Activated CD8-positive, alpha-beta memory T cell treated with anti-CD3 and anti-CD28 coated beads, Interleukin-2, amount 10 ng/mL, durations not matched to agents 7 days and 5 days (primary cell): ENCODE measurements at regions of chr19 and their contacts with region 1.

Region 1: GRCh38 chr19:4267101-4267900 is 11.8 kb upstream of the SHD start:
- DNase-seq: peak; percentile 75
- ATAC-seq: peak; percentile 69
- H3K4me3 Mint-ChIP-seq: no peak overlapping the region
- H3K27ac Mint-ChIP-seq: peak overlapping the region; percentile 35
- H3K4me1 Mint-ChIP-seq: peaks cover 36% of the 10 kb centered on the region
- H3K27me3 Mint-ChIP-seq: no peaks in the 10 kb centered on the region

Region 2: DNA sequence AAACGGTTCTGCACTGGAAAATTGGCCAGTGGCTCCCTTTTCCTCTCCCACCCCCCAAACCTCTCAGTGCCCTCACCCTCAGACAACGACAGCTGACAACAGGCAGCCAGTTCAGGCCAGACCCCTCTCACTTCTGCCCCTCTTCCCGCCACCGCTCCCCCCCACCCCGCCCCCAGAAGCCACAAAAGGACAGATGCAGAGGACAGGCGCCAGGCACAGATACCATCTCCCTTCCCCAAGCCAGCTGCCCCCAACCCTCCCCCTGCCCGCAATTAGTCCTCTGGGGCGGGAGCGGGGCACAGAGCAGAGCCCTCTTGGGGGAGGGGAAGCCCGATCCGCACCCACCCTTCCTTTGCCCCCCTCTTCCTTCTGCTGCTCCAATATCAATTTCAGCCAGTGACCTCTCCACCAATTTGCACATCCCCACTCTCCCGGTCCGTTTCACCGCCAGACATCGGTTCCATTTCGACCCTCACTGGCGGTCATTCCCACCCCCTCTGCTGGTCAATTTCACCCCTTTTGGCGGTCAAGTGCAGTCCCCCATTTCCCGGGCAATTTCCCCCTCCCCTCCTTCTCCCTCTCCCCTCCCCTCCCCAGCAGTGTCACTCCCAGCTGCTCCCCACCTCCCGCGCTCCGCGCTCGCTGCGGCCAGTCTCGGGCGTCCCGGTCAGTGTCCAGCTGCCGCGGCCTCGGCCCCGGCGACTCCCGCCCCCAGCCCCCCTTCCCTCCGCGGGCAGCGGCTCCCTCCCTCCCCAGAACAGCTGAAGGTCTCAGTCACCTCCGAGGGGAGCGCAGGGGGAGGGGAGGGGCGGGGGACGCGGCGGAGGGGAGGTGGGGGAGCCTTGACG is 11.3 kb after region 1 on chr19 and contains the start of gene SHD:
- CTCF ChIA-PET with region 1: interaction called, 10 read pairs
- DNase-seq: no peak
- ATAC-seq: no peak
- H3K4me3 Mint-ChIP-seq: no peak within 1 kb of the TSS
- H3K27ac Mint-ChIP-seq: no peak within 1 kb of the TSS
- H3K4me1 Mint-ChIP-seq: peaks cover 4% of the 10 kb centered on the region
- H3K27me3 Mint-ChIP-seq: peaks cover 35% of the 10 kb centered on the region
- total RNA-seq, gene SHD: not detected

Region 3: DNA sequence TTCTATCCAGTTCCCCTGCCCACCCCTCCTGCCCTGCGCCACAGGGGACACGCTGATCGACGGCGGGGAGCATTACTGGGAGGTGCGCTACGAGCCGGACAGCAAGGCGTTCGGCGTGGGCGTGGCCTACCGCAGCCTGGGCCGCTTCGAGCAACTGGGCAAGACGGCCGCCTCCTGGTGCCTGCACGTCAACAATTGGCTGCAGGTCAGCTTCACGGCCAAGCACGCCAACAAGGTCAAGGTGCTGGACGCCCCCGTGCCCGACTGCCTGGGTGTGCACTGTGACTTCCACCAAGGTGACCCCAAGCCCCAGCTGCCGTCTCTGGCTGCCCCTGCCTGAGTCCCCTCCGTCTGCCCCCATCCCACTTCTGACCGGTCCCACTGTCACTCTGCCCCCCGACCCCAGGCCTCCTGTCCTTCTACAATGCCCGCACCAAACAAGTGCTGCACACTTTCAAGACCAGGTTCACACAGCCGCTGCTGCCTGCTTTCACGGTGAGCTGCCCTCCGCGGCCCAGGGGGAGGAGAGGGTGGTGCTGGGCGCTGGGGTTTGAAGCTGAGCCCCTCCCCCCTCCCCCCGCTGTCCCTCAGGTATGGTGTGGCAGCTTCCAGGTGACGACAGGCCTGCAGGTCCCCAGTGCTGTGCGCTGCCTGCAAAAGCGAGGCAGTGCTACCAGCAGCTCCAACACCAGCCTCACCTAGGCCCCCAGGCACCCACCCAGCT is 55.8 kb after region 1 on chr19:
- CTCF ChIA-PET with region 1: interaction called, 19 read pairs
- DNase-seq: no peak
- ATAC-seq: no peak
- H3K4me3 Mint-ChIP-seq: no peak overlapping the region
- H3K27ac Mint-ChIP-seq: no peak overlapping the region
- H3K4me1 Mint-ChIP-seq: peaks cover 16% of the 10 kb centered on the region
- H3K27me3 Mint-ChIP-seq: peaks cover 8% of the 10 kb centered on the region

Region 4: GRCh38 chr19:4352701-4353121 is 85.4 kb after region 1 on chr19:
- CTCF ChIA-PET with region 1: interaction called, 125 read pairs
- DNase-seq: peak; percentile 76
- ATAC-seq: peak; percentile 69
- H3K4me3 Mint-ChIP-seq: no peak overlapping the region
- H3K27ac Mint-ChIP-seq: no peak overlapping the region
- H3K4me1 Mint-ChIP-seq: peaks cover 1% of the 10 kb centered on the region
- H3K27me3 Mint-ChIP-seq: no peaks in the 10 kb centered on the region

Region 5: DNA sequence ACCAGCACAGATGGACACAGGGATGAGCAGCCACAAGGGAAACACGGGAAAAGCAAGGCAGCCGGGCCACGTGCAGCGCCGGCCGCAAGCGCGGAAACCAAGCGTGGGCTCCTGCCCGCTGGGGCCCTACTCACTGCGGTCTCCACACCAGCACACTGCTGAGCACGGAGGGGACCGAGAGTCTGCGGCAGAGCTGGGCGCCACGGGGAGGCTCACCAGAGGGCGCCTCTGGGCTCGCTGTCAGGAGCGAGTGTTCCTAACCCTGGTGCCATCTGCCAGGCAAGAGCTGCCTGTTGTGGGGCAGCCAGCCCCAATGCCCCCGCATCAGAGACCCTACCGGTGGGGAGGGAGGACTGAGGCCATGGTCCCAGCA is 102.6 kb after region 1 on chr19:
- CTCF ChIA-PET with region 1: interaction called, 15 read pairs
- DNase-seq: peak; percentile 89
- ATAC-seq: peak; percentile 80
- H3K4me3 Mint-ChIP-seq: peak overlapping the region; percentile 66
- H3K27ac Mint-ChIP-seq: peak overlapping the region; percentile 93
- H3K4me1 Mint-ChIP-seq: peaks cover 60% of the 10 kb centered on the region
- H3K27me3 Mint-ChIP-seq: no peaks in the 10 kb centered on the region

Region 6: GRCh38 chr19:4524808-4525562 is 257.7 kb after region 1 on chr19:
- CTCF ChIA-PET with region 1: interaction called, 48 read pairs
- DNase-seq: peak; percentile 78
- ATAC-seq: peak; percentile 90
- H3K4me3 Mint-ChIP-seq: no peak overlapping the region
- H3K27ac Mint-ChIP-seq: no peak overlapping the region
- H3K4me1 Mint-ChIP-seq: no peaks in the 10 kb centered on the region
- H3K27me3 Mint-ChIP-seq: no peaks in the 10 kb centered on the region